ENCODE measurements at regions of chr16 and their contacts with region 1.

Region 1: GRCh38 chr16:55981557-55981956 is 106.4 kb upstream of the CES5A start:
- DNase-seq: no peak
- ATAC-seq: no peak
- H3K4me3 ChIP-seq: no peak overlapping the region
- H3K27ac ChIP-seq: no peak overlapping the region
- H3K4me1 ChIP-seq: no peaks in the 10 kb centered on the region
- H3K27me3 ChIP-seq: no peaks in the 10 kb centered on the region
- CTCF ChIP-seq: no peak

Region 2: DNA sequence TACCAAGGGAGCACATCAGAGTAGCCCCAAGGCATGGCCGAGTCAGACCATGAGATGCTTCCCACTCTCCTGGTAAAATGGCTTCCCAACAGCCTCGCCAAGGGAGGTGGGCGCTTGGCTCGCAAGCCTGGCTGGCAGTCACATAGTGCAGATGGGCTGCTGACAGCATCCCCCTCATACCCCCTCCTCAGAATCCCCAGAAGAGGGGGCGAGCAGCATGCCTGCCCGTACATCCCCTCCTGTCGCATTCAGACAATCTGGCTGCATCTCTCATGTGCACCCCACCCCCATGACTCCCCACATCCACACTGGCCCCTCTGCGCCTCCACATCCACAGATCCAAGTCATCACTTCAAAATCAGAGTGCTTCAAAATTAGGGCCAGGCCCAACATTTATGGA is 52.4 kb before region 1 on chr16:
- intact Hi-C with region 1: loop called in 1 of 10 experiments (anchors 10 kb)
- DNase-seq: no peak
- ATAC-seq: no peak
- H3K4me3 ChIP-seq: no peak overlapping the region
- H3K27ac ChIP-seq: no peak overlapping the region
- H3K4me1 ChIP-seq: no peaks in the 10 kb centered on the region
- H3K27me3 ChIP-seq: no peaks in the 10 kb centered on the region
- CTCF ChIP-seq: no peak

Measured in heart right ventricle (tissue), 16 donors.